CD8-positive, alpha-beta T cell (primary cell): ENCODE measurements at regions of chr3 and their contacts with region 1.

Region 1: DNA sequence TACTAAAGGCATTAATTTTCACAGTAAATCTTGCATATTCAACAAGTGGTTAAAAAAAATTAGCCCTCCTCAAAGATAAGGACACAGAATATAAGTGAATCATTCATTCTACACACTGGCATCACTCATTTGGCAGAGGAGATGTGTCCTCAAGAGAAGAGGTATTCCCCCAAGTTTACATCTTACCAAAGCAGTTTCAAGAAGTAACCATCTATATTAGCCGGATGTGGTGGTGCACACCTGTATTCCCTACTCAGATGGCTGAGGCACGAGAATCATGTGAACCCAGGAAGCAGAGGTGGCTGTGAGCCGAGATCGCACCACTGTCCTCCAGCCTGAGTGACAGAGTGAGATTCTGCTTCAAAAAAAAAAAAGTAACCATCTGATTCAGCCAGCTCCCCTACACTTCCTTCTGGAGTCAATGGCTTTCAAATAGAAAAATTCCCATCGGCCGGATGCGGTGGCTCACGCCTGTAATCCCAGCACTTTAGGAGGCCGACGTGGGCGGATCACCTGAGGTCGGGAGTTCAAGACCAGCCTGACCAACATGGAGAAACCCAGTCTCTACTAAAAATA is 15.4 kb downstream of the RAF1 start:
- DNase-seq: peak in 1 of 9 experiments; percentile 17
- ATAC-seq: peak; percentile 17
- H3K4me3 ChIP-seq: no peak overlapping the region
- H3K4me3 Mint-ChIP-seq: no peak overlapping the region
- H3K27ac ChIP-seq: no peak overlapping the region
- H3K27ac Mint-ChIP-seq: no peak overlapping the region
- H3K4me1 ChIP-seq: peaks cover 21% of the 10 kb centered on the region
- H3K4me1 Mint-ChIP-seq: peaks cover 62% of the 10 kb centered on the region
- H3K27me3 ChIP-seq: no peaks in the 10 kb centered on the region
- H3K27me3 Mint-ChIP-seq: no peaks in the 10 kb centered on the region
- CTCF ChIP-seq: no peak

Region 2: DNA sequence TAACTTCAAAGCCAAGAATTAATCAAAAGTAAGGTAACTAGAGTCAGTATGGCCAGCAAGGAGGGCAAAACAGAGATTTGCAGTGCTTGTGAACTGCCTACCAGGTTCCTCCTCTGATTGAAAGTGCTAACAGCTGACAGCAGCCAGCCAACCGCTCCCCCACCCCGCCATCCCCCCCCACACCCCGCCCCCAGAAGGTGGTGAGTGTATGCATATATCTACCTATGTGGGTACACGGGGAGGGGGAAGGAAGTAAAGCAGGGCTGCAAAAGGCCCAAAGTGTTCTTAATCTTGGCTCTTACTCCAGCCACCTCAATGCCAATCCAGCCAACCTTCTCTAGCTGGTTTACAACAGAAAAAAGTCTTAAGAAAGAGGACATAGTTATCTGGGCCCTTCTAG is 35.2 kb before region 1 on chr3:
- CTCF ChIA-PET with region 1: no interaction called
- POLR2A ChIA-PET with region 1: no interaction called
- intact Hi-C with region 1: loop called in 1 of 2 experiments (anchors 5 kb)
- DNase-seq: peak in 4 of 9 experiments; percentile 3 to 37 (median 21)
- ATAC-seq: peak; percentile 88
- H3K4me3 ChIP-seq: no peak overlapping the region
- H3K4me3 Mint-ChIP-seq: no peak overlapping the region
- H3K27ac ChIP-seq: peak overlapping the region in 1 of 2 experiments; percentile 38
- H3K27ac Mint-ChIP-seq: peak overlapping the region; percentile 79
- H3K4me1 ChIP-seq: peaks cover 14% of the 10 kb centered on the region
- H3K4me1 Mint-ChIP-seq: peaks cover 36% of the 10 kb centered on the region
- H3K27me3 ChIP-seq: no peaks in the 10 kb centered on the region
- H3K27me3 Mint-ChIP-seq: no peaks in the 10 kb centered on the region
- CTCF ChIP-seq: no peak